Adrenal gland (tissue), 19 donors: ENCODE measurements at regions of chr6 and their contacts with region 1.

Region 1: DNA sequence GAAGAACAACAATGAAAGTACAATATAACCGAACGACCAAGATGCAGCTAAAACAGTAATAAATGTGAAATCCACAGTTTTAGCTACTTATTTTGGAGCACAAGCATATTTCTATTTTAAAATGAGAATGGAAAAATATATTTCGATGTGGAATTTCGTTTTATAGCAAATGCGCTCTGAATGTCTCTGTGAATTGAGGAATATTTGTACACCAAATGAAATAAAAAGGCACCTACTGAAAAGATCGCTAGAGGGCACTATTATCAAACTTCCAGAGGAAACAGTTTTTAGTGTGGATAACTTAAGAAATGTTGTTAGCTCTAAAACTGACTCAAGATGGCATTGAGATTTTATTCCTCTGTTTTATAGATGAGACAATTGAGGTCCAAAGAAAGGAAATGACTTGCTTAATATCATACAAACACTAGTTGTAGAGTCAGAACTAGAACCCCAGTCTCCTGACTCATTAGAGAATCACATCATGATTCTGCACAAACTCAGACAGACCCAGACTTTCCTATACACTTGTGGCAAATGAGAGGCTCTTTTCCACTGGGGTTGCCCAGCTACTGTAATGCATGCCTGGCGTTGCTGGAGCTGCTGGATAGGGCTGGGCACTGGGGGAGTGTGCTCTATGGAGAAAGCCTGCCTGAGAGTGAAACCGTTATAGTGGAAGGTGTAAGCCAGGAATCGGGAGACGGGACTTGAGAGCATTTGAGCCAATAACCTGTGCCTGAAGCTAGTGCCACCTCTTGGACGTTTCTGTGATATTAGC is 51.9 kb downstream of the GCLC start:
- DNase-seq: peak in 4 of 7 donors; percentile 26 to 40 (median 33)
- H3K4me3 ChIP-seq: peak overlapping the region in 1 of 4 donors; percentile 37
- H3K27ac ChIP-seq: peak overlapping the region in 1 of 5 donors; percentile 40
- H3K4me1 ChIP-seq: peaks cover 0 to 16% of the 10 kb centered on the region in 2 donors
- H3K27me3 ChIP-seq: no peaks in the 10 kb centered on the region
- CTCF ChIP-seq: peak; percentile 55 to 88 (median 76)
- POLR2A ChIP-seq: no peak

Region 2: GRCh38 chr6:53544470-53545308 is 51.6 kb after region 1 on chr6 and contains the start of gene GCLC:
- intact Hi-C with region 1: loop called in 1 of 2 experiments (anchors 5 kb)
- DNase-seq: peak; percentile 93 to 97 (median 96)
- H3K4me3 ChIP-seq: peak within 1 kb of the TSS; percentile 45 to 90 (median 62)
- H3K27ac ChIP-seq: peak within 1 kb of the TSS; percentile 92 to 98 (median 95)
- H3K4me1 ChIP-seq: peaks cover 0 to 41% of the 10 kb centered on the region in 2 donors
- H3K27me3 ChIP-seq: no peaks in the 10 kb centered on the region
- CTCF ChIP-seq: peak; percentile 18 to 78 (median 60)
- POLR2A ChIP-seq: peak; percentile 97 to 98
- total RNA-seq, gene GCLC: 26.5 to 65.6 (median 39.8) TPM

Region 3: GRCh38 chr6:53643481-53643965 is 150.5 kb after region 1 on chr6:
- intact Hi-C with region 1: loop called in 1 of 2 experiments (anchors 5 kb)
- DNase-seq: no peak
- H3K4me3 ChIP-seq: no peak overlapping the region
- H3K27ac ChIP-seq: no peak overlapping the region
- H3K4me1 ChIP-seq: no peaks in the 10 kb centered on the region
- H3K27me3 ChIP-seq: no peaks in the 10 kb centered on the region
- CTCF ChIP-seq: no peak
- POLR2A ChIP-seq: no peak

Region 4: GRCh38 chr6:53651764-53652401 is 158.8 kb after region 1 on chr6:
- intact Hi-C with region 1: loop called in 1 of 2 experiments (anchors 5 kb)
- DNase-seq: peak; percentile 76 to 89 (median 85)
- H3K4me3 ChIP-seq: peak overlapping the region in 3 of 4 donors; percentile 32 to 54 (median 51)
- H3K27ac ChIP-seq: peak overlapping the region in 3 of 5 donors; percentile 69 to 84 (median 73)
- H3K4me1 ChIP-seq: peaks cover 0 to 11% of the 10 kb centered on the region in 2 donors
- H3K27me3 ChIP-seq: no peaks in the 10 kb centered on the region
- CTCF ChIP-seq: peak in 5 of 6 experiments; percentile 28 to 47 (median 31)
- POLR2A ChIP-seq: peak in 1 of 2 donors; percentile 66

Region 5: GRCh38 chr6:53725791-53726431 is 232.9 kb after region 1 on chr6:
- intact Hi-C with region 1: loop called (anchors 5 to 10 kb)
- DNase-seq: peak; percentile 62 to 87 (median 81)
- H3K4me3 ChIP-seq: no peak overlapping the region
- H3K27ac ChIP-seq: no peak overlapping the region
- H3K4me1 ChIP-seq: no peaks in the 10 kb centered on the region
- H3K27me3 ChIP-seq: no peaks in the 10 kb centered on the region
- CTCF ChIP-seq: peak; percentile 83 to 98 (median 89)
- POLR2A ChIP-seq: no peak